ENCODE measurements at regions of chr6 and their contacts with region 1.

Region 1: DNA sequence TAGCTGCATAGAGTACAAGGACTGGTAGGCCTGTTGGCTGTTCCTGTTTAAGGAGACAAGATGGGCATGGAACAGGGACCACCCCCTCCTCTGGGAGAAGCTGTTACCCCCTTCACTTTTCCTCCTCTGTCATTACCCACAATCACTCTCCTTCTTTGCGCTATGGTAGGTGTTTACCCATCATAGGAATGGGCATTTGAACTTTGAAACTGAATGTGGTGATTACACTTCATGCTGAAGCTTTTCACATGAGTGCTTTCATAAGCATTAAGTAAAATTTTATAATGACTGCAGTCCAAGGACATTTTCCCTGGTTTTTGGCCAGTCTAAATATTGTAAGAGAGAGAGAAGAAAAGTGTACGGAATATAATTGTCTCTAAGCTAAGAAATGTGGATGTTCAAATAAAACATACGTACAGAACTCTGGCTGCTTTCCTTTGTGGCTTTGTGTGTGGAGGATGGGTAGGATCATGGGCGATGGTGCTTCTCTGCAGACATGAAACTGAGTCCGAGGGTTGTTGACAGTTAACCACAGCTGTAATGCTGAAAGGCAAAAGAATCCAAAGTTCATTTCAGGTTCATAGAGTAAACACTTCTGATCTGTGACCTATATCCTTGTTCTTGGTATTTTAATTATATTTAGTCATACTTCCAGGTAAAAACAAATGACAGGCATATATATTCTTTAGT is 56.3 kb downstream of the CCN2 start:
- DNase-seq: peak; percentile 45 to 63
- H3K4me3 ChIP-seq: no peak overlapping the region
- H3K4me3 Mint-ChIP-seq: peak overlapping the region; percentile 26
- H3K27ac Mint-ChIP-seq: peak overlapping the region; percentile 7
- H3K4me1 ChIP-seq: peaks cover 34% of the 10 kb centered on the region
- H3K4me1 Mint-ChIP-seq: peaks cover 12% of the 10 kb centered on the region
- H3K27me3 ChIP-seq: no peaks in the 10 kb centered on the region
- H3K27me3 Mint-ChIP-seq: no peaks in the 10 kb centered on the region
- CTCF ChIP-seq: no peak

Region 2: DNA sequence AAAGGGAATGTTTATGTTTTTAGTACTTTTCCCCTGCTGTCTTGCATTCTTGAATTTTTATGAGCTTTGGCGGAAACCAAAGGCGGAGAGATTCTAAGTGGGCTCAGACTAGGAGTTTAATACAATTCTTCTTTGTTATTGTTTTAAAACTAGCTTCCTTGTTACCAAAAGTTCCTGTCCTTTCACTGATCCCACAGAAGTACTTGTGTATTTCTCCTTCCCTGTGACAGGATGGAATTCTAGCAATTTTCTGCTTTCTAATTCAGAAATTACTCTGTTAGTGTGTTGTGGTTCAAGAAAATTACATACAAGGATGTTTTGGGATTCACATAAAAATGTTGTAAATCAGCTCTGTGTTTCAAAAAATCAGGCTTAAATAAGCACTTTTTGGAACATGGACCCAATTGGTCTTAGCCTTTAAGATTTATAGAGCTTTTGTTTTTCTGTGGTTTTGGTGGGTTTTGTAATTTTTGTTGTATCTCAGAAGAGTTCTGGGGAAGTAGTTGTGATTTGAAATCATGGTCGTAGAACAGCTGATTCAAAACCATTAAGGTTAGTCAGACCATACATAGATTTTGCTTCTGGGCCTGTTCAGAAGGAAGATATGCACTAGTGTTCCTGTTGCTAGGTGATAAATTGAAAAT is 166.5 kb before region 1 on chr6:
- CTCF ChIA-PET with region 1: no interaction called
- POLR2A ChIA-PET with region 1: interaction called, 12 read pairs
- intact Hi-C with region 1: no loop called
- DNase-seq: no peak
- H3K4me3 ChIP-seq: no peak overlapping the region
- H3K4me3 Mint-ChIP-seq: no peak overlapping the region
- H3K27ac Mint-ChIP-seq: no peak overlapping the region
- H3K4me1 ChIP-seq: no peaks in the 10 kb centered on the region
- H3K4me1 Mint-ChIP-seq: no peaks in the 10 kb centered on the region
- H3K27me3 ChIP-seq: no peaks in the 10 kb centered on the region
- H3K27me3 Mint-ChIP-seq: peaks cover 4% of the 10 kb centered on the region
- CTCF ChIP-seq: no peak

Region 3: DNA sequence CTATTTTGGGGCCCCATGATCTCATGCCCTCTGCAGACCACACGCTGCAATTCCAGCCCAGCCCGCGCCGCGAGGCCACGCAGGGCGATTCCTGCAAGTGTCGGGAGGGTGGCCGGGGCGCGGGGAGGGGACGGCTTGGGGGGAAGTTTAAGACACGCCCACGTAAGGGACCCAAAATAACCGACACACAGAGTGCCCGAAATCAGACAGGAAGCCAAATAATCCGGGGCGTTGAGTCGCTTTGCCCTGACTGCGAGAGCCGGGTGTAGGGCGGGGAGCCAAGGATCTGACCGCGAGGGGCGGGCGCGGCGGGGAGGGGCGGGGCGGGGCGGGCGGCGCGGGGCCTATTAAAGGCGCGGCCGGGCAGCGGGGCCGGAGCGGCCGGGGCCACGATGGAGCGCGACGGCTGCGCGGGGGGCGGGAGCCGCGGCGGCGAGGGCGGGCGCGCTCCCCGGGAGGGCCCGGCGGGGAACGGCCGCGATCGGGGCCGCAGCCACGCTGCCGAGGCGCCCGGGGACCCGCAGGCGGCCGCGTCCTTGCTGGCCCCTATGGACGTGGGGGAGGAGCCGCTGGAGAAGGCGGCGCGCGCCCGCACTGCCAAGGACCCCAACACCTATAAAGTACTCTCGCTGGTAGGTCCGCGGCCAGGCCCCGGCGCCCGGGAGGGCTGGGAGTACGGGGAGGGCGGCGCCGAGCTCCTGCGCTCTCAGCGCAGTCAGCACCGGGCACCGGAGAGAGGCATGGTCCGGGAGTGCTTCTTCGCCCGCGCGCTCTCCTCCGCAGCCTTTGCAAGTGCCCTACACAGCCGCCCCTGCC is 87.0 kb before region 1 on chr6 and contains the start of gene ENPP1:
- CTCF ChIA-PET with region 1: no interaction called
- POLR2A ChIA-PET with region 1: no interaction called
- intact Hi-C with region 1: loop called (anchors 10 kb)
- DNase-seq: peak; percentile 61 to 65
- H3K4me3 ChIP-seq: peak within 1 kb of the TSS; percentile 57
- H3K4me3 Mint-ChIP-seq: peak within 1 kb of the TSS; percentile 86
- H3K27ac Mint-ChIP-seq: no peak within 1 kb of the TSS
- H3K4me1 ChIP-seq: peaks cover 6% of the 10 kb centered on the region; the same call in 1 of the 2 replicates
- H3K4me1 Mint-ChIP-seq: peaks cover 9% of the 10 kb centered on the region
- H3K27me3 ChIP-seq: no peaks in the 10 kb centered on the region
- H3K27me3 Mint-ChIP-seq: peaks cover 18% of the 10 kb centered on the region
- CTCF ChIP-seq: peak in 1 of 2 experiments; percentile 40
- total RNA-seq, gene ENPP1: 4.6 and 4.8 TPM in 2 replicates

Region 4: DNA sequence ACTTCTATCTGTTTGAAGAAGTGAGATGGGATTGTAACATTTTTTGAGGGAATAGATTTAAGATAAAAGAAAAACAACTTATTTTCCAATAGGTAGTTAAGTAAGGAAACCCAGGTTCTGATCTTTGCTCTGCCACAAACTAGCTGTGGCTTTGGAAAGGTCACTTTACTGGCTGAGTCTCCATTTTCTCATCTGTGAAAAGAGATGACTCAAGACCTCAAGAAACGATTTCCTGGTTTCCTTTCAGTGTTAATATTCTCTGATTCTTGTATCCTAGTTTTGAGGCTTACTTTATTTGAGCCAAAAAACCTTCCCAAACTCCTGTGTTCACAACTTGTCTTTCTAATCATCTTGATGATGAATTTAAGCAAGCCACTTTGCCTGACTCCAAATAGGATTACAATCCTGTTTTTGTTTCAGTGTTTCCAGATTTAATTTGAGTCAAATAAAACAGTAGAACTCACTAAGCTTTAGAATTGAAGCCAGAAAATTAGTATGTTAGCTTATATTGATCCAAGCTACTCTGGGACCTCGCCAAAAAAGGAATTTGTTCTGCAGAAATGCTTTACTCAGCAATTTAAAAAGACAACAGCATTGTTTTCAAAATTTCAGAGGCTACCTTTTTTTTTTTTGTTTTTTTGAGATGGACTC is 36.0 kb before region 1 on chr6:
- CTCF ChIA-PET with region 1: no interaction called
- POLR2A ChIA-PET with region 1: no interaction called
- intact Hi-C with region 1: loop called (anchors 5 kb)
- DNase-seq: no peak
- H3K4me3 ChIP-seq: no peak overlapping the region
- H3K4me3 Mint-ChIP-seq: no peak overlapping the region
- H3K27ac Mint-ChIP-seq: no peak overlapping the region
- H3K4me1 ChIP-seq: peaks cover 16% of the 10 kb centered on the region
- H3K4me1 Mint-ChIP-seq: peaks cover 15% of the 10 kb centered on the region
- H3K27me3 ChIP-seq: no peaks in the 10 kb centered on the region
- H3K27me3 Mint-ChIP-seq: no peaks in the 10 kb centered on the region
- CTCF ChIP-seq: no peak

Region 5: DNA sequence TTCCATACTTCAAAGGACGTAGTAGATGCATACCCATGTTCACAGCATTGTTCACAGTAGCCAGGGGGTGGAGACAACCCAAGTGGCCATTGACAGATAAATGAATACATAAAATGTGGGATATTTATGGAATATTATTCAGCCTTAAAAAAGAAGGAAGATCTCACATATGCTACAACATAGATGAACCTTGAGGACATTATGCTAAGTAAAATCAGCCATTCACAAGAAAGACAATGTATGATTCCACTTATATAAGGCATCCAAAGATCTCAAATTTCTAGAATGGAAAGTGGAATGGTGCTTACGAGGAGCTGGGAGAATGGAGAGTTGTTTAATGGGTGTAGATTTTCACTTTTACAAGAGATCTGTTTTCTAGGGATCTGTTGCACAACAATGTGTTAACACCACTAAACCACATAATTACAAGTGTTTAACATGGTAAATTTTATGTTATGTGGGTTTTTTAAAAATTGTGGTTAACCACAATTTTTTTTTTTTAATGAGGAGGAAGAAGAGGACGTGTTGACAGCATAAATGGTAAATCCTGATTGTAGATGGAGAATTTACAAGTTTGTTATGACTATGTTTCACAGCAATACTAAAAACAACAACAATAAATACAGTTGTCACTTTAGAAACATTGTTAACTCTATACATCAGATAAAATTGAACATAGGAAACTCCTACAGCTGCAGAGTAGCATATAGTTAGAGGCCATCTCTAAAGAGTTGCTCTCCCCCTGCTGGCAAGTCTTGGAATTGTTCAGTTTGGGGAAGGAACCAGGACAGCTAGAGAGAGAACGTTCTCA is 14.7 kb after region 1 on chr6:
- CTCF ChIA-PET with region 1: no interaction called
- POLR2A ChIA-PET with region 1: no interaction called
- intact Hi-C with region 1: loop called (anchors 1 kb)
- DNase-seq: peak; percentile 66 to 80
- H3K4me3 ChIP-seq: no peak overlapping the region
- H3K4me3 Mint-ChIP-seq: no peak overlapping the region
- H3K27ac Mint-ChIP-seq: no peak overlapping the region
- H3K4me1 ChIP-seq: no peaks in the 10 kb centered on the region
- H3K4me1 Mint-ChIP-seq: peaks cover 7% of the 10 kb centered on the region
- H3K27me3 ChIP-seq: no peaks in the 10 kb centered on the region
- H3K27me3 Mint-ChIP-seq: no peaks in the 10 kb centered on the region
- CTCF ChIP-seq: peak; percentile 67 to 77